ENCODE measurements at regions of chr4 and their contacts with region 1.

Region 1: GRCh38 chr4:74659576-74660411 is 134.5 kb downstream of the BTC start:
- DNase-seq: peak; percentile 99
- H3K4me3 Mint-ChIP-seq: peak overlapping the region; percentile 32
- H3K27ac Mint-ChIP-seq: peak overlapping the region; percentile 98
- H3K4me1 Mint-ChIP-seq: peaks cover 40% of the 10 kb centered on the region
- H3K27me3 Mint-ChIP-seq: no peaks in the 10 kb centered on the region
- CTCF ChIP-seq: no peak

Region 2: GRCh38 chr4:73740353-73740778 is 919.4 kb before region 1 on chr4 and contains the start of gene CXCL8:
- CTCF ChIA-PET with region 1: no interaction called
- POLR2A ChIA-PET with region 1: no interaction called
- intact Hi-C with region 1: no loop called
- DNase-seq: peak; percentile 99
- H3K4me3 Mint-ChIP-seq: peak within 1 kb of the TSS; percentile 70
- H3K27ac Mint-ChIP-seq: peak within 1 kb of the TSS; percentile 56
- H3K4me1 Mint-ChIP-seq: peaks cover 18% of the 10 kb centered on the region
- H3K27me3 Mint-ChIP-seq: no peaks in the 10 kb centered on the region
- CTCF ChIP-seq: no peak
- total RNA-seq, gene CXCL8: 17.0 and 36.2 TPM in 2 replicates

Region 3: GRCh38 chr4:74623041-74623440 is 36.8 kb before region 1 on chr4:
- CTCF ChIA-PET with region 1: interaction called, 5 read pairs
- POLR2A ChIA-PET with region 1: interaction called, 6 read pairs
- intact Hi-C with region 1: loop called (anchors 2 kb)
- DNase-seq: peak; percentile 74
- H3K4me3 Mint-ChIP-seq: no peak overlapping the region
- H3K27ac Mint-ChIP-seq: no peak overlapping the region
- H3K4me1 Mint-ChIP-seq: peaks cover 52% of the 10 kb centered on the region
- H3K27me3 Mint-ChIP-seq: no peaks in the 10 kb centered on the region
- CTCF ChIP-seq: peak; percentile 47